BJ (cell line): ENCODE measurements at regions of chr11 and their contacts with region 1.

Region 1: GRCh38 chr11:65900125-65900898 is at the start of gene FOSL1:
- DNase-seq: peak; percentile 82
- H3K4me3 ChIP-seq: peak within 1 kb of the TSS; percentile 86
- H3K27me3 ChIP-seq: no peaks in the 10 kb centered on the region
- CTCF ChIP-seq: no peak
- polyA plus RNA-seq, gene FOSL1: 8.2 and 10.3 TPM in 2 replicates

Region 2: DNA sequence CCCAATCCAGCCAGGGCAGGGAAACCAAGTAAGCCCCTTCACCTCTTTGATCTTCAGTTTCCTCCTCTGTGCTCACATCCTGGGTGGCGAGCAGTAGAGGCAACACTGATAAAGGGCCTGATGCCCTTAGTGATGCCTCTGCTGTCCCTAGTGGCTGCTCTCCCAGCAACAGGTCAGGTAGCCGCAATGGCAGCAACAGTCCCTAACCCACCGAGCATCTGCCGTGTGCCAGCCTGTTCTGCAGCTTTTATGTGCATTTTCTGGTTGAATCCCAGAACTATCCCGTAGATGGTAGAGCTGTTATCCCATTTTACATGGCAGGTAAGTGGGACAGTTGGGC is 370.2 kb before region 1 on chr11:
- CTCF ChIA-PET with region 1: no interaction called
- POLR2A ChIA-PET with region 1: no interaction called
- DNase-seq: no peak
- H3K4me3 ChIP-seq: no peak overlapping the region
- H3K27me3 ChIP-seq: no peaks in the 10 kb centered on the region
- CTCF ChIP-seq: peak; percentile 44

Region 3: DNA sequence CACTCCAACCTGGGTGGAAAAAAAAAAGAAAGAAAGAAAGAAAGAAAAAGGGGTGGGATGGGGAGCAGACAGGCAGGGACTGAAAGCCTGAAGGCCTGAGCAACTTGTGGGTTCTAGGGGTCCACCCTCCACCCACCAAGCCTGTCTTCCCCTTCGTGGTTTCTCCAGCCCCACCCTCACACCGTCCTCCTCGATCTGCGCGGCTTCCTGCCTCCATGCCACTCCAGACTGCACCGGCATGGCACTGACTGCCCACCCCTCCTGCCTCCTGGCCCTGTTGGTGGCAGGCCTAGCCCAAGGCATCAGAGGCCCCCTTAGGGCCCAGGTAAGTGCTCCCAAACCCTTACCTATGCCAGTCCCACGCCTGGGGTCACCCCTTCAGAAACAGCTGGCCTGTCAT is 20.7 kb before region 1 on chr11 and contains the start of gene CTSW:
- CTCF ChIA-PET with region 1: interaction called, 130 read pairs
- POLR2A ChIA-PET with region 1: interaction called, 15 read pairs
- DNase-seq: no peak
- H3K4me3 ChIP-seq: no peak within 1 kb of the TSS
- H3K27me3 ChIP-seq: no peaks in the 10 kb centered on the region
- CTCF ChIP-seq: no peak
- polyA plus RNA-seq, gene CTSW: 0.15 and 0.21 TPM in 2 replicates